ACHN (cell line): ENCODE measurements at regions of chr16 and their contacts with region 1.

Region 1: GRCh38 chr16:16052916-16053315 is 103.5 kb downstream of the ABCC1 start:
- DNase-seq: no peak

Region 2: DNA sequence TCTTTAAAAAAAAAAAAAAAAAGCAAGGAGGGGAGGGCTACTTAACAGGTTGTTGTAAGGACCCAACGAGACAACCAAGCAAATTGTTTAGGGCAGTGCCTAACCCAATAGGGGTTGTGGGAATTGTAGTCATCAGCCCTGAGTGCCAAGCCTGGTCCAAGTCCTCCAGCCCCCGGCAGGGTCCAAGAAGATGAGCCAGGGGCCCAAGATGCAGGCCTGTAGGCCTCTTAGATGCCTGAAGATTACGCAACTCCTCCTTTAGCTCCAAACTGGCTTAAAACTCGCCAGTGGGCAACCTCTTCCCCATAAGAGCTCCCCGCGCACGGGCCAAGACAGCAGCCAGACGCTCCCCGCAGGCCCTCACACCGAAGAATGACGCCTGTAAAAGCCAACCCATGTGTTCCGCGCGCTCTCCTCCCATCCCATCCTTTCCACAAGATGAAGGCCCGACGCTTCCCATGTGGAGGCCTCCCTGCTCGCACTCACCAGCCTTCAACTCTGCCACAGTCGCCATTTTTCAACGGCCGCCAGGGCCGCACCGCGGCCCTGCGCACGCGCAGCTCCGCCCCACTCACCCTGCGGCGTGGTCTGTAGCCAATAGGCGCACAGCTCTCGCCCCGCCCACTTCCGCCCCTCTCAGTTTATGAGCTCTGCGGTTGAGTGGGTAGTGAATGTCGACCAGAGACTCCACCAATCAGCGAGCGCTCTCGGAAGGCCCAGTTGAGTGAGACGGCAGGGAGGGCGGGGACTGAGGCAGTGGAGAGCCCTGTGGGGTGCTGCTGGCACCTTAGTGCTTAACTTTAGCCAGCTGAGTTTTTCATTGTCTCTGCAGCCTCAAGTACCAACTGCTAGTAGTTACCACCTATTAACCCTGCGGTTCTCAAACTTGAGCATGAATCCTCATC is 164.6 kb before region 1 on chr16 and contains the start of gene CEP20:
- in situ Hi-C with region 1: no loop called
- DNase-seq: peak; percentile 100

Region 3: DNA sequence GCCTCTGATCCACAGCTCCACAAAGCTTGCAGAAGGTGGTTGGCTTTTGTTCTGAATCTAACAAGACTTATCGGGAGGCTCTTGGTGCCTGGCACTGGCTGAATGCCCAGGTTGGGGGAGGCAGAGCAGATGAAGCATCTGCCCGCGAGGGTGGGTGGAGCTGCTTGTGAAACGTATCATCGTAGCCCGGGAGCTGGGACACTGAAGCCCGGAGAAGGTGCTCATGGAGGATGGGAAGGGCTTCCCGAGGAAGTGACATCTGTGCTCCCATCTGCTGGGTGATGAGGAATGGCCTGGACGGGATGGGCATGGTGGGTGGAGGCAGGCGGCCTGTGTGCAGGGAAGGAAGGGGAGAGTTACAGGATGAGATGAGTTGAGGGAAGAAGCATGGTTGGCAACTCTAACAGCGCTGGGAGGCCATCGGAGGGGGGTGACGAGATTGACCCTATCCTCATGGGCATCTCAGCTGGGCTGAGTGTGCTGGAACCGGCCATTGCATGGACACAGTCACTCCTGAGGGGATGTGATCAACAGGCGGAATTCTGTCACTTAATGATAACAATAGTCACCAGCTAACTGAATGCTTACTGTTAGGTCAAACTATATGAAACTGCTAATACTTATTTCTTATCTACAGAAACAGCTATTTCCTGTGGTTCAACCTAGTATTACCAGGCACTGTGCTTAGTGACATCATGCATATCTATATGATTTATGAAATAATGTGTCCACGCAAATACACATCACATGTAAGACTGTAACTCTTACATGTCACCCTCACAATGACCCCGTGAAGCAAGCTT is 67.7 kb after region 1 on chr16:
- in situ Hi-C with region 1: loop called (anchors 5 kb)
- DNase-seq: no peak

Region 4: GRCh38 chr16:16137056-16137455 is 84.1 kb after region 1 on chr16:
- in situ Hi-C with region 1: no loop called
- DNase-seq: no peak